AG04449 (cell line): ENCODE measurements at regions of chr3 and their contacts with region 1.

Region 1: DNA sequence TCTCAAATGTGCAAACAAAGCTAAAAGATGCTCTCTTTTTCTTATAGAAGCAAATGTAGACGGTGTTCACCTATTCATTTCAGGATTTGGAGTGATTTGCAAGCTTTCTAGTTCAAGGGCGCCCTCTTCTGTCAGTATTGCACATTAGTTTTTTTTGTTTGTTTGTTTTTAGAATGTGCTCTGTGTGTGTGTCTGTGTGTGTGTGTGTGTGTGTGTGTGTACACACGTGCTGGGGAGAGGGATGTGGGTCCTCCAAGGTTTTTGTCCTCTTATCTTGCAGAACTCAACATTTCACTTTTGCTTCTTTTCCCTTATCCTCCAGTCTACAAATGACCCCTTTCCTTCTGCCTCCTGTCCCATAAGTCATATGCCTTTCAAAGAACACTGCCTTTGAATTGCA is 23.5 kb downstream of the DNAH1 start:
- DNase-seq: peak; percentile 57
- H3K4me3 ChIP-seq: no peak overlapping the region
- CTCF ChIP-seq: peak; percentile 51

Region 2: DNA sequence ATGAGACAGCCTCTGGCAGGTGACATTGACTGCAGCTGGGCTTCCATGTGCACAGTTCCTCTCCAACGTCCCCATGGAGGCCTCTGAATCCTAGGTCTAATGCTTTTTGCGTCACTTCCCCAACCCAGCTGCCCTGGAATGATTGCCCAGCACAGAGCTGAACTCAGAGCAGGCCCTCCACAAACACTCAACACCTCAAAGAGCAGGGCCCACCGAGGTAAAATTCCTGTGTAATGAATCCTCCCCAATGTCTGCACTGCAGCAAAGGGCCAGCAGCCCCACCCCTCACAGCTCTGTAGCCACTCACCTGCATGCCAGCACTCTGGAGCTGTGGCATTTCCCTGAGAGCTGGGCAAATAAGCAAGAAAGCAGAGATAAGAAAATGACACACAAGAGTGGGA is 240.6 kb before region 1 on chr3:
- CTCF ChIA-PET with region 1: no interaction called
- POLR2A ChIA-PET with region 1: no interaction called
- DNase-seq: no peak
- H3K4me3 ChIP-seq: no peak overlapping the region
- CTCF ChIP-seq: no peak

Region 3: DNA sequence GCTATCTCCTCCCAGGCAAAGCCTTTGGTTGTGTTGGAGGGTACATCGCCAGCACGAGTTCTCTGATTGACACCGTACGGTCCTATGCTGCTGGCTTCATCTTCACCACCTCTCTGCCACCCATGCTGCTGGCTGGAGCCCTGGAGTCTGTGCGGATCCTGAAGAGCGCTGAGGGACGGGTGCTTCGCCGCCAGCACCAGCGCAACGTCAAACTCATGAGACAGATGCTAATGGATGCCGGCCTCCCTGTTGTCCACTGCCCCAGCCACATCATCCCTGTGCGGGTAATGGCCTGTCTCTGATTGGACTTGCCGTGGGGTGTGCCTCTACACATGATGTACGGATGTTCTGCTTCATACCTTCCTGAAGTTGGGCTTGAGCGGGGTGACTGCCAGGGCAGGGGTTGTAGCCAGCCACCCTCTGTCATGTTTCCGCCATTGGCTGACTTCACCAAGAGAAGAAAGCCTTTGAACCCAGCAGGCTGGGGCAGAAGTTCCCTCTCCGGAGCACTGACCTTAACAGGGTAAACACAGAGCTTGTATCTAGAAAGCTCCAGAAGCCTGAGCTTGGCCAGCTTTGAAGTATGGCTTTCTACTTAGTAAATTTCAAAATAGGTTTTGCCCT is 128.2 kb before region 1 on chr3:
- CTCF ChIA-PET with region 1: interaction called, 389 read pairs
- POLR2A ChIA-PET with region 1: no interaction called
- DNase-seq: no peak
- H3K4me3 ChIP-seq: no peak overlapping the region
- CTCF ChIP-seq: no peak

Region 4: DNA sequence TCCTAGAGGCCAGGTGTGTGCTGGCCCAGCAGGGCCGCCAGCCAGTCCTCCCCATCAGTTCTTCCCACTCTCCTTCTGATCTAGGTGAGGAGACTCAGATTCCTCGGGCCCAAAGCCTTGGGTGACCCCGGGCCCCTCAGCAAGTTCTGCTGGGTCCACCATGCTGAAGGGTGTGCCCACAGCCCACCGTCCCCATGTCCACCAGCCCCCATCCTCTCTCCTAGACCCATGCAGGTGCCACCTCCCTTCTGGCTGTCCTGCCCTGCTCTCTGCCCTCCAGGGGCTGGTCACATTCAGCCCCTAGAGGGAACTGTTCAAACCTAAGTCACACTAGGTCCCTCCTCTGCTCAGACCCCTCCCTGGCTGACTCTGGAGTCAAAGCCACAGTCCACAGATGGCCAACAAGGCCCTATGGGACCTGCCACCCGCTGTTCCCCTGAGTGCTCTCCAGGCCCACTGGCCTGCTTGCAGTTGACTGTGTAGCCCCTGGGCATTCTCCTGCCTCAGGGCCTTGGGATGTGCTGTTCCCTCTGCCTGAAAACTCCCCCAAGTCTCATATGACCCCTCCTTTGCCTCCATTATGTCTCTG is 113.3 kb before region 1 on chr3:
- CTCF ChIA-PET with region 1: interaction called, 389 read pairs
- POLR2A ChIA-PET with region 1: no interaction called
- DNase-seq: no peak
- H3K4me3 ChIP-seq: no peak overlapping the region
- CTCF ChIP-seq: no peak

Region 5: DNA sequence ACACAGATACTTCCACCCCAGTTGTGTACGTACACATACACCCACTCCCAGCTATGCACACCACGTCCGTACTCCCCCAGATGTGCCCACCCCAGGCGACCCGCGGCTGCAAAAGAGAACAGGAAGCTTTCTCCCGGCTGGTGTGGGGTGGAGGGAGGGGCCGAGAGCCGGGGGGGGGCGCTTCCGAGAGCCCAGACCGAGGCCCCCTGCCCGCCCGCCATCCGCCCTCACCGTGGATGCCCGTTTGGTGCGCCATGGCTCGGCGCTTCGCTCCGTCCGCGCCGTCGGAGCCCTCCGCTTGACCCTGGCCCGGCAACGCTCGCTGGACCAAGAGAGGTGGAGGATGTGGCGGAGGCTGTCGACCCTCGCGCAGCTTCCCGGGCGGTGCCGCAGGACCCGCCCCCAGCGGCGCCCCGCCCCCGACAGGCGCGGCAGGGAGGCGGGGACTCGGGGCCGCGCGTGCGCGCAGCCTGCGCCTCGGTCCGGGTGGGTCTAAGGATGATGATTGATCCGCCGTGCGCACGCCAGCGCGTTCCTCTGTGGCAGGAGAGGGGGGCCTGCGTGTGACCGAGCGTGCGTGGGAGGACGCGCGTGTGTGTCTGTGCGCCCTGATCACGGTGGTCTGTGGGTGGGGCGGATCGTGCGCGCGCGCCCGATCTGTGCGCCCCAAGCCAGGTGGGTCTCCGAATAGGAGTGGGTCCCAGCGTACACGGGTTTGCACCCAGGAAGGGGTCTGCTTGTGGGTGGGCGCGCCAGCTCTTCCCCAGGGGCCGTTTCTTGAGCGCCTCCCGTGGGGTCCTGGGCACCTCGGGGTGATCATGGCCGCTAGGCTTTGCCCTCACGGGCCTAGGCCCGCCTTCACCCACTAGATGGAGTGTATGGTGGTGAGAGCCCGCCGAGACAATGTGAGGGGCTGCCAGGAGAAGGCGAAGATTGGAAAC is 100.6 kb before region 1 on chr3 and contains the start of gene TWF2:
- CTCF ChIA-PET with region 1: interaction called, 21 read pairs
- POLR2A ChIA-PET with region 1: no interaction called
- DNase-seq: no peak
- H3K4me3 ChIP-seq: peak within 1 kb of the TSS; percentile 95
- CTCF ChIP-seq: peak; percentile 43

Region 6: DNA sequence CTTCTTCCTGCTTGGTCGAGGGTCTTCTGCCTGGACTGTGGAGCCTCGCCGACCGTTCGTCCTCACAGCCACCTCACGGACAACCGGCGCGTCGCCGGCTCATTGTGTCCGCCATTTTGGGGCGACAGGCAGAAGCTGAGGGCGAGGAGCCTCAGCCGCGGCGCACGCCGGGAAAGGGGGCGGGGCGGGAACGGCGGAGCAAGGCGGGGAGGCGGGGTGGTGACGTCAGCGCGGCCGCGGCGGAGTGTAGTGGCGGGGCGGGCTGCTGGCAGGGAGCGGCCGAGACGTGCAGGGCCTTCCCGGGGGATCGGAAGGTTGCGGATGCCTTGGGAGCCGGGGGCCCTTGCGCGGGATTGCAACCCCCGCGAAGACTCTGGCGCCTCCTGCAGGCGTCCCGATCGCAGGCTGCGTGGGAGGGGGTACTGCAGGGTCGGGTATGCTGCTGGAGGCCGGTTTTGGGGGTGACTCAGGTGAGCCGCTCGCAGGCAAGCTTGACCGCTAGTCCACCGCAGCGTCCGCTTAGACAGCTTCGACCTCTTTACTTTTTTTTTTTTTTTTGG is 61.0 kb before region 1 on chr3 and contains the start of gene WDR82:
- CTCF ChIA-PET with region 1: interaction called, 498 read pairs
- POLR2A ChIA-PET with region 1: no interaction called
- DNase-seq: peak; percentile 38
- H3K4me3 ChIP-seq: peak within 1 kb of the TSS; percentile 98
- CTCF ChIP-seq: peak; percentile 73

Region 7: DNA sequence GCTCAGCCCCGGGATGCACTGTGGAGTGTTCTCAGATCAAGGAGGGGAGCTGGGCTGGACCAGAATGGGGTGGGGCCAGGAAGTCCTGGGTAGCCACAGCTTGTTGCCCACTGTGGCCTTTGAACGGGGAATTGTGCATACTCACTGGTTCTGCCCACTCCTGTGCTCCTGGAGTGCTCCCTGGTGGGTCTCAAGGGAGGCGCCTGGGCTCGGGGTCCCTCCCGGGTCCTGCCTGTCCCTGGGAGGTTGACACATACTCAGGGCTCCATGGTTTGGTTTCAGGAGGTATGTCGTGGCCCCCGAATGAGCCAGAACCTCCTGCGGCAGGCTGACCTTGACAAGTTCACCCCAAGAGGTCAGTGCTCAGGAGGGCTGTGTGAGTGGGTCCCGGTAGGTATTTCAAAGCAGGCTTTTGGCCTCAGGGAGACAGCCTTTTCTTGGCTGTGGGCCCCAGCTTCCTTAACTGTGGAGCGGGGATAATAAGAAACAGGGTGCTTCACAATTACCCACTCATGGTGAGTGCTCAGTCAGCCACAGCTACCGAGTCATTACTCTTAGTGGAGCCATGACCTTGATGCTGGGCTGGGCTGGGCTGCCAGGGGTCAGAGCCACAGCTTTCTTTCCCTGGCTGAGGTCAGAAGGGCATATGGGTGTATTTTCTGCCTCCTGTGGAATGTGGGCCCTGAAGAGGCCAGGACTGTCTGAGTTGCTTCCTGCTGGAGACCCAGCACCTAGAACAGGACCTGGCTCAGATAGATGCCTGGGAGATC is 15.9 kb before region 1 on chr3:
- CTCF ChIA-PET with region 1: interaction called, 93 read pairs
- POLR2A ChIA-PET with region 1: no interaction called
- DNase-seq: no peak
- H3K4me3 ChIP-seq: no peak overlapping the region
- CTCF ChIP-seq: no peak

Region 8: GRCh38 chr3:52361898-52362297 is 22.3 kb after region 1 on chr3:
- CTCF ChIA-PET with region 1: interaction called, 10 read pairs
- POLR2A ChIA-PET with region 1: no interaction called
- DNase-seq: no peak
- H3K4me3 ChIP-seq: no peak overlapping the region
- CTCF ChIP-seq: no peak